Activated CD8-positive, alpha-beta T cell treated with anti-CD3 and anti-CD28 coated beads for 36 hours (primary cell): ENCODE measurements at regions of chr3 and their contacts with region 1.

Region 1: DNA sequence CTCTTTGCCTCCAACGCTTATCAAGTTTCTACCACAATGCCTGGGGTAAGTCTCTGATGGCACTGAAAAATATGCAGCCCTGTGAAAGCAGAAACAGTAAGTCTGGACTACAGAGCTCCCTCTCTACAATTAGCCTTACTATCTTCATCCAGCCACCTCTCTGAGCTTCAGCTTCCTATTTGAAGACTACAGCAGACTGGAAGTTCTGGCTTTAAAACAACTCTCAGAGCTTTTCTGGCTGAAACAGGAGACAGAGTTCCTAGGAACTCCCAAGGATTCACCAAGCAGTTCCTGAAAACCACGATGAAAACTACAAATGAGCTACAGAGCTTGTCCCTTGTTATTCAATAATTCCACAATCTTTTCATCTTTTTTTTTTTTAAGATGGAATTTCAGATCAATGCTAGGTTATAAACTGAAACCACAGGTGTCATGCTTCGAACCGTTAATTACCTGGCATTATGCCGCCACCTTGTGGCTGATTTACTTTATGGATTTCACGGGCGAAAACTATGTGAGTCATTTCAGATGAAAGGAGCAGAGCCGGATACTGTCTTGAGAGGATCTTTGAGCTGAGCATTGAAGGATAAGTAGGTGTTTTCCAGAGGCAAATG is 3.9 kb downstream of the CRYGS start:
- DNase-seq: peak; percentile 90
- ATAC-seq: peak; percentile 85
- H3K4me3 Mint-ChIP-seq: no peak overlapping the region
- H3K27ac Mint-ChIP-seq: no peak overlapping the region
- H3K4me1 Mint-ChIP-seq: peaks cover 58% of the 10 kb centered on the region
- H3K27me3 Mint-ChIP-seq: no peaks in the 10 kb centered on the region
- CTCF ChIP-seq: peak; percentile 79

Region 2: DNA sequence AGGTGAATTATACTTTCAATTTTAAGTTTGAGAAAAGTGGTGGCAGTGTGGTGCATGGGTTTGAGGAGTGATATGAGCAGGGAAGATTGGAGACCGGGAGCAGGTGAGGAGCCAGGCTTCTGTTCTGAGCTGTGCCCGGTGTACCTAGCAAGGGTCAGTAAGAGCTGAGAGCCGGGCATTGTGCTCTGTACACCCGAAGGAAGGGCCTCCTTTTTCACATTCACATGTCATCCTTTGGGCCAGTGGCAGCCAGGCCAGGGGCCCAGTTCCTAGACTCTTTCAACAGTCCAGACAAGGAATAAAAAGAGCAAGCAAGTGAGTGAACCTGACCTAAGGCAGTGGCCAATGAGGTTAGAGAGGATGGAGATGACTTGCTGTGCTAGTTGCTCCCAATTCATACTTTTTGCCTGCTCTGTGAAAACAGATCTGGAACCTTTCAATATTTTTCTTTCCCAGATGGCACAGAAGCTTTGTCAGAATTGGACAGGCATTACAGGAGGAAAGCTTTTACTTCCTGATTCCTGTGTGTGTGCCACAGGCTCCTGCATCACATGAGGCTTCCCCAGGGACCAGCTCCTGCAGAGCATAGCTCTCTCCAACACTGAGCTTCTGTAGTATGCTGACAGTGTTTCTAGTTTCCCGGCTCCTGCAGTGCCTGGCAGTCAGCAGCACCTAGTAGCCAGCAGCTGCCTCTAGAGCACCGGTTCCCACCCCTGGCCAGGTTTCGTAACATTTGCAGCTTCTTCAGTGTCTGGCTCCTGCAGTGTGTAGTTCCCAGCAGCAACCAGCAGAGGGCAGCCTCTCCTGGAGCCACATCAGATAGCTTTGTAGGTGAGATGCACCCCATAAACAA is 597.2 kb before region 1 on chr3:
- CTCF ChIA-PET with region 1: interaction called, 22 read pairs
- POLR2A ChIA-PET with region 1: no interaction called
- intact Hi-C with region 1: no loop called
- DNase-seq: peak; percentile 92
- ATAC-seq: peak; percentile 100
- H3K4me3 Mint-ChIP-seq: no peak overlapping the region
- H3K27ac Mint-ChIP-seq: no peak overlapping the region
- H3K4me1 Mint-ChIP-seq: peaks cover 22% of the 10 kb centered on the region
- H3K27me3 Mint-ChIP-seq: peaks cover 8% of the 10 kb centered on the region
- CTCF ChIP-seq: peak; percentile 99

Region 3: GRCh38 chr3:185983495-185984141 is 556.7 kb before region 1 on chr3:
- CTCF ChIA-PET with region 1: interaction called, 32 read pairs
- POLR2A ChIA-PET with region 1: interaction called, 3 read pairs
- intact Hi-C with region 1: loop called (anchors 5 kb)
- DNase-seq: peak; percentile 66
- ATAC-seq: peak; percentile 77
- H3K4me3 Mint-ChIP-seq: no peak overlapping the region
- H3K27ac Mint-ChIP-seq: no peak overlapping the region
- H3K4me1 Mint-ChIP-seq: peaks cover 6% of the 10 kb centered on the region
- H3K27me3 Mint-ChIP-seq: peaks cover 6% of the 10 kb centered on the region
- CTCF ChIP-seq: peak; percentile 98

Region 4: GRCh38 chr3:186259612-186260383 is 280.5 kb before region 1 on chr3:
- CTCF ChIA-PET with region 1: interaction called, 147 read pairs
- POLR2A ChIA-PET with region 1: interaction called, 7 read pairs
- intact Hi-C with region 1: loop called (anchors 1 kb)
- DNase-seq: peak; percentile 78
- ATAC-seq: peak; percentile 88
- H3K4me3 Mint-ChIP-seq: peak overlapping the region; percentile 15
- H3K27ac Mint-ChIP-seq: peak overlapping the region; percentile 56
- H3K4me1 Mint-ChIP-seq: peaks cover 20% of the 10 kb centered on the region
- H3K27me3 Mint-ChIP-seq: peaks cover 2% of the 10 kb centered on the region
- CTCF ChIP-seq: peak; percentile 71

Region 5: GRCh38 chr3:186489507-186489906 is 50.8 kb before region 1 on chr3:
- CTCF ChIA-PET with region 1: interaction called, 17 read pairs
- POLR2A ChIA-PET with region 1: no interaction called
- intact Hi-C with region 1: no loop called
- DNase-seq: no peak
- ATAC-seq: no peak
- H3K4me3 Mint-ChIP-seq: no peak overlapping the region
- H3K27ac Mint-ChIP-seq: no peak overlapping the region
- H3K4me1 Mint-ChIP-seq: peaks cover 12% of the 10 kb centered on the region
- H3K27me3 Mint-ChIP-seq: peaks cover 2% of the 10 kb centered on the region
- CTCF ChIP-seq: no peak

Region 6: GRCh38 chr3:186520957-186521842 is 19.1 kb before region 1 on chr3:
- CTCF ChIA-PET with region 1: interaction called, 82 read pairs
- POLR2A ChIA-PET with region 1: interaction called, 32 read pairs
- intact Hi-C with region 1: no loop called
- DNase-seq: peak; percentile 78
- ATAC-seq: peak; percentile 53
- H3K4me3 Mint-ChIP-seq: no peak overlapping the region
- H3K27ac Mint-ChIP-seq: peak overlapping the region; percentile 11
- H3K4me1 Mint-ChIP-seq: peaks cover 54% of the 10 kb centered on the region
- H3K27me3 Mint-ChIP-seq: no peaks in the 10 kb centered on the region
- CTCF ChIP-seq: no peak

Region 7: DNA sequence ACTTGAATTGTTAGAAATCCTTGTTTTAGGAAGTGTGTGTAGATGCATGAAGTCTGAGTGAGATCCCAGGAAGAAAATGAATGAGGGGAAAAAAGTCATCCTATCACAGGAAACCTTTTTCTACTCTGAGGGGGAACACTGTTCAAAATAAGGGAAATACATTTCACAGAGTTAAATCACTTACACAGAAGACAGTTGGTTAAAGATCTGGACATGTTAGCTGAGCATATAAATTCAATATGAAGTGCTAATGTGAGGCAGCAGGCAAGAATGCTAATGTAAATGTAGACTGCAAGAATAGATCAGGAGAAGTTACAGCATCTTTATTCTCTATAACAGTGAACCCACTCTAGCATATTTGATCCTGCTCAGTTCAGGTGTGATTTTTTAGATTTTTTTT is 24.3 kb after region 1 on chr3:
- CTCF ChIA-PET with region 1: interaction called, 16 read pairs
- POLR2A ChIA-PET with region 1: interaction called, 5 read pairs
- intact Hi-C with region 1: no loop called
- DNase-seq: no peak
- ATAC-seq: no peak
- H3K4me3 Mint-ChIP-seq: no peak overlapping the region
- H3K27ac Mint-ChIP-seq: no peak overlapping the region
- H3K4me1 Mint-ChIP-seq: peaks cover 56% of the 10 kb centered on the region
- H3K27me3 Mint-ChIP-seq: no peaks in the 10 kb centered on the region
- CTCF ChIP-seq: no peak